ENCODE measurements at regions of chr1 and their contacts with region 1.

Region 1: GRCh38 chr1:45339789-45340570 is at the starts of genes MUTYH and TOE1:
- DNase-seq: peak; percentile 89 to 92 (median 90)
- H3K4me3 ChIP-seq: peak within 1 kb of the TSS; percentile 84 to 91
- H3K4me3 Mint-ChIP-seq: peak within 1 kb of the TSS; percentile 98 to 100 (median 100)
- H3K27ac ChIP-seq: peak within 1 kb of the TSS; percentile 93
- H3K27ac Mint-ChIP-seq: peak within 1 kb of the TSS; percentile 96 to 100 (median 99)
- H3K4me1 ChIP-seq: peaks cover 46% of the 10 kb centered on the region
- H3K4me1 Mint-ChIP-seq: peaks cover 31 to 75% (median 51%) of the 10 kb centered on the region in 4 donors
- H3K27me3 ChIP-seq: no peaks in the 10 kb centered on the region
- H3K27me3 Mint-ChIP-seq: no peaks in the 10 kb centered on the region
- total RNA-seq, gene MUTYH: 70.0 to 72.1 TPM
- total RNA-seq, gene TOE1: 18.2 to 18.9 TPM

Region 2: GRCh38 chr1:44631647-44632539 is 708.1 kb before region 1 on chr1:
- CTCF ChIA-PET with region 1: no interaction called
- POLR2A ChIA-PET with region 1: interaction called, 7 read pairs
- intact Hi-C with region 1: loop called (anchors 2 kb)
- DNase-seq: peak; percentile 86 to 92 (median 88)
- H3K4me3 ChIP-seq: peak overlapping the region; percentile 38 to 65
- H3K4me3 Mint-ChIP-seq: peak overlapping the region; percentile 91 to 97 (median 93)
- H3K27ac ChIP-seq: peak overlapping the region; percentile 85
- H3K27ac Mint-ChIP-seq: peak overlapping the region; percentile 96 to 99 (median 97)
- H3K4me1 ChIP-seq: peaks cover 35% of the 10 kb centered on the region
- H3K4me1 Mint-ChIP-seq: peaks cover 27 to 50% (median 33%) of the 10 kb centered on the region in 4 donors
- H3K27me3 ChIP-seq: no peaks in the 10 kb centered on the region
- H3K27me3 Mint-ChIP-seq: no peaks in the 10 kb centered on the region

Region 3: DNA sequence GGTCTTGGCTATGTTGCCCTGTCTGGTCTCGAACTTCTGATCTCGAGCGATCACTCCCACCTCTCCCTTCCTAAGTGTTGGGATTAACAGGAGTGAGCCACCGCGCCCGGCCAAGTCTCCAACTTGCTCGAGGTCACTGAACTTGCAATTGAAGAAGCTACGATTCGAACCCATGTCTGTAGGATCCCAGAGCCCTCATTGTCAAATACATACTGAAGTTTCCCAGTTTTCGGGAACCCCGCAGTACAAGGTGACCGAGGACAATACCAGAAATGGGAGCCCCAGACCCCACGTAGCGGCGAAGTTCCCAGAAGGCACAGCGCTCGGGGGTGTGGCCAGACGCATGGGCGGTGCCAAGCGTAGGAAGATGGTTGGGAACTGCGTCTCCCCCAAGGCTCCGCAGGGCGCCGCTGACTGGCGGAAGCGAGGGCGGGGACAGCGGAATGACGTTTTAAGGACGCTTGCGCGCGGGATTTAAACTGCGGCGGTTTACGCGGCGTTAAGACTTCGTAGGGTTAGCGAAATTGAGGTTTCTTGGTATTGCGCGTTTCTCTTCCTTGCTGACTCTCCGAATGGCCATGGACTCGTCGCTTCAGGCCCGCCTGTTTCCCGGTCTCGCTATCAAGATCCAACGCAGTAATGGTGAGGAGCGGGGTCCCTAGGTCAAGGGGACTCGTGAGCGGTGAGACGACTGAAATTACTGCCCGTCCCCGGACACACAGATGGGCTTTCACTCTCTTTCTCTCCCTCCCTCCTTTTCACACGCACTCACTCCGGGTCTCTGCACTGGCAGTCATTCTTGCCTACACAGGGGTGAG is 600.4 kb before region 1 on chr1 and contains the start of gene KIF2C:
- CTCF ChIA-PET with region 1: no interaction called
- POLR2A ChIA-PET with region 1: no interaction called
- intact Hi-C with region 1: loop called (anchors 1 kb)
- DNase-seq: peak; percentile 93 to 96 (median 95)
- H3K4me3 ChIP-seq: peak within 1 kb of the TSS; percentile 78 to 82
- H3K4me3 Mint-ChIP-seq: peak within 1 kb of the TSS; percentile 92 to 98 (median 95)
- H3K27ac ChIP-seq: peak within 1 kb of the TSS; percentile 79
- H3K27ac Mint-ChIP-seq: peak within 1 kb of the TSS; percentile 95 to 97 (median 96)
- H3K4me1 ChIP-seq: peaks cover 15% of the 10 kb centered on the region
- H3K4me1 Mint-ChIP-seq: peaks cover 5 to 26% (median 15%) of the 10 kb centered on the region in 4 donors
- H3K27me3 ChIP-seq: no peaks in the 10 kb centered on the region
- H3K27me3 Mint-ChIP-seq: no peaks in the 10 kb centered on the region
- total RNA-seq, gene KIF2C: 1.4 to 1.5 TPM

Region 4: GRCh38 chr1:44807262-44808062 is 532.5 kb before region 1 on chr1 and contains the start of gene DYNLT4:
- CTCF ChIA-PET with region 1: no interaction called
- POLR2A ChIA-PET with region 1: interaction called, 19 read pairs
- intact Hi-C with region 1: no loop called
- DNase-seq: peak; percentile 91 to 98 (median 91)
- H3K4me3 ChIP-seq: peak within 1 kb of the TSS; percentile 41 to 57
- H3K4me3 Mint-ChIP-seq: peak within 1 kb of the TSS; percentile 74 to 87 (median 80)
- H3K27ac ChIP-seq: peak within 1 kb of the TSS; percentile 98
- H3K27ac Mint-ChIP-seq: peak within 1 kb of the TSS; percentile 98 to 100 (median 99)
- H3K4me1 ChIP-seq: peaks cover 91% of the 10 kb centered on the region
- H3K4me1 Mint-ChIP-seq: peaks cover 57 to 94% (median 73%) of the 10 kb centered on the region in 4 donors
- H3K27me3 ChIP-seq: no peaks in the 10 kb centered on the region
- H3K27me3 Mint-ChIP-seq: no peaks in the 10 kb centered on the region
- total RNA-seq, gene DYNLT4: 0.47 TPM in 1 of 2 experiments, not detected in the other

Region 5: GRCh38 chr1:45282351-45282750 is 57.6 kb before region 1 on chr1:
- CTCF ChIA-PET with region 1: no interaction called
- POLR2A ChIA-PET with region 1: no interaction called
- intact Hi-C with region 1: no loop called
- DNase-seq: no peak
- H3K4me3 ChIP-seq: no peak overlapping the region
- H3K4me3 Mint-ChIP-seq: no peak overlapping the region
- H3K27ac ChIP-seq: no peak overlapping the region
- H3K27ac Mint-ChIP-seq: no peak overlapping the region
- H3K4me1 ChIP-seq: no peaks in the 10 kb centered on the region
- H3K4me1 Mint-ChIP-seq: no peaks in the 10 kb centered on the region
- H3K27me3 ChIP-seq: no peaks in the 10 kb centered on the region
- H3K27me3 Mint-ChIP-seq: peaks cover 5 to 6% of the 10 kb centered on the region in 2 donors

Region 6: GRCh38 chr1:45490626-45491486 is 150.9 kb after region 1 on chr1 and contains the start of gene TESK2:
- CTCF ChIA-PET with region 1: interaction called, 66 read pairs
- POLR2A ChIA-PET with region 1: interaction called, 53 read pairs
- intact Hi-C with region 1: loop called (anchors 1 kb)
- DNase-seq: peak; percentile 97 to 100 (median 99)
- H3K4me3 ChIP-seq: peak within 1 kb of the TSS; percentile 71 to 79
- H3K4me3 Mint-ChIP-seq: no peak within 1 kb of the TSS
- H3K27ac ChIP-seq: peak within 1 kb of the TSS; percentile 68
- H3K27ac Mint-ChIP-seq: no peak within 1 kb of the TSS
- H3K4me1 ChIP-seq: peaks cover 22% of the 10 kb centered on the region
- H3K4me1 Mint-ChIP-seq: peaks cover 5 to 13% (median 10%) of the 10 kb centered on the region in 4 donors
- H3K27me3 ChIP-seq: no peaks in the 10 kb centered on the region
- H3K27me3 Mint-ChIP-seq: no peaks in the 10 kb centered on the region
- total RNA-seq, gene TESK2: 7.5 to 7.7 TPM

Region 7: GRCh38 chr1:45550401-45551351 is 210.7 kb after region 1 on chr1 and contains the start of gene AKR1A1:
- CTCF ChIA-PET with region 1: no interaction called
- POLR2A ChIA-PET with region 1: interaction called, 17 read pairs
- intact Hi-C with region 1: no loop called
- DNase-seq: peak; percentile 86 to 89 (median 88)
- H3K4me3 ChIP-seq: peak within 1 kb of the TSS; percentile 82 to 87
- H3K4me3 Mint-ChIP-seq: peak within 1 kb of the TSS; percentile 95 to 98 (median 96)
- H3K27ac ChIP-seq: peak within 1 kb of the TSS; percentile 79
- H3K27ac Mint-ChIP-seq: peak within 1 kb of the TSS; percentile 92 to 98 (median 97)
- H3K4me1 ChIP-seq: peaks cover 23% of the 10 kb centered on the region
- H3K4me1 Mint-ChIP-seq: peaks cover 14 to 31% (median 22%) of the 10 kb centered on the region in 4 donors
- H3K27me3 ChIP-seq: no peaks in the 10 kb centered on the region
- H3K27me3 Mint-ChIP-seq: no peaks in the 10 kb centered on the region
- total RNA-seq, gene AKR1A1: 84.3 to 89.8 TPM

Measured in CD4-positive, alpha-beta memory T cell (primary cell).